ENCODE measurements at regions of chr14 and their contacts with region 1.

Region 1: GRCh38 chr14:42980419-42980818 is 1373.7 kb downstream of the LRFN5 start:
- DNase-seq: no peak
- ATAC-seq: no peak
- H3K4me3 ChIP-seq: no peak overlapping the region
- H3K27ac ChIP-seq: no peak overlapping the region
- H3K4me1 ChIP-seq: no peaks in the 10 kb centered on the region
- H3K27me3 ChIP-seq: no peaks in the 10 kb centered on the region
- CTCF ChIP-seq: no peak

Region 2: DNA sequence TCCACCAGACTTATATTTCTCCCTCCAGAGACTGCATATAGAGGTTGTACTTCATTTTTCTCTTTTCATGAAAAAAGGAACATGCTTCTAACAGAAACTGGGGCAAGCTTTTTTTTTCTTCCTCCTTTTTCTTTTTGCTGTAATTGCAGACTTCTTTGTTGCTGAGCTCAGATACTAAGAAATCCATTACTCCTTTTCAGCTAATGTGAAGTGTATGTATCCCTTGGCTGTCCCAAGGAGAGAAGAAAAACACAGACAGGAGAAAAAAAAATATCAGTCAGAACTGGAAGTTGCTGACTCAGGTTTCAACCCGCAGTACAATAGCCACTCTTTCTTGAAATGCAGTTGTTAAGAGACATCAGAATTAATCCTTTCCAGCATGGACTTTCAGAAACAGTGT is 125.3 kb before region 1 on chr14:
- CTCF ChIA-PET with region 1: no interaction called
- POLR2A ChIA-PET with region 1: no interaction called
- in situ Hi-C with region 1: no loop called
- intact Hi-C with region 1: no loop called
- DNase-seq: no peak
- ATAC-seq: no peak
- H3K4me3 ChIP-seq: no peak overlapping the region
- H3K27ac ChIP-seq: no peak overlapping the region
- H3K4me1 ChIP-seq: no peaks in the 10 kb centered on the region
- H3K27me3 ChIP-seq: no peaks in the 10 kb centered on the region
- CTCF ChIP-seq: no peak

Region 3: GRCh38 chr14:43052897-43053296 is 72.5 kb after region 1 on chr14:
- CTCF ChIA-PET with region 1: no interaction called
- POLR2A ChIA-PET with region 1: no interaction called
- in situ Hi-C with region 1: no loop called
- intact Hi-C with region 1: no loop called
- DNase-seq: no peak
- ATAC-seq: no peak
- H3K4me3 ChIP-seq: no peak overlapping the region
- H3K27ac ChIP-seq: no peak overlapping the region
- H3K4me1 ChIP-seq: no peaks in the 10 kb centered on the region
- H3K27me3 ChIP-seq: no peaks in the 10 kb centered on the region
- CTCF ChIP-seq: no peak

Region 4: GRCh38 chr14:43306053-43306452 is 325.6 kb after region 1 on chr14:
- CTCF ChIA-PET with region 1: no interaction called
- POLR2A ChIA-PET with region 1: interaction called, 11 read pairs
- in situ Hi-C with region 1: no loop called
- intact Hi-C with region 1: no loop called
- DNase-seq: no peak
- ATAC-seq: no peak
- H3K4me3 ChIP-seq: no peak overlapping the region
- H3K27ac ChIP-seq: no peak overlapping the region
- H3K4me1 ChIP-seq: no peaks in the 10 kb centered on the region
- H3K27me3 ChIP-seq: no peaks in the 10 kb centered on the region
- CTCF ChIP-seq: no peak

Measured in Panc1 (cell line).